ENCODE measurements at regions of chr9 and their contacts with region 1.

Region 1: GRCh38 chr9:34899535-34900158 is 58.4 kb upstream of the PHF24 start:
- DNase-seq: peak; percentile 50 to 90 (median 73)
- ATAC-seq: peak; percentile 98 to 100 (median 100)
- H3K4me3 ChIP-seq: no peak overlapping the region
- H3K4me3 Mint-ChIP-seq: no peak overlapping the region
- H3K27ac ChIP-seq: no peak overlapping the region
- H3K27ac Mint-ChIP-seq: no peak overlapping the region
- H3K4me1 ChIP-seq: no peaks in the 10 kb centered on the region
- H3K4me1 Mint-ChIP-seq: no peaks in the 10 kb centered on the region
- H3K27me3 ChIP-seq: peaks cover 6 to 12% of the 10 kb centered on the region in 2 experiments
- H3K27me3 Mint-ChIP-seq: peaks cover 25 to 29% of the 10 kb centered on the region in 2 donors

Region 2: GRCh38 chr9:34985311-34985899 is 85.8 kb after region 1 on chr9:
- CTCF ChIA-PET with region 1: interaction called, 5 to 23 read pairs
- POLR2A ChIA-PET with region 1: no interaction called
- DNase-seq: peak in 25 of 35 experiments; percentile 8 to 75 (median 31)
- ATAC-seq: no peak
- H3K4me3 ChIP-seq: no peak overlapping the region
- H3K4me3 Mint-ChIP-seq: peak overlapping the region in 1 of 3 donors; percentile 12
- H3K27ac ChIP-seq: no peak overlapping the region
- H3K27ac Mint-ChIP-seq: peak overlapping the region; percentile 30 to 38
- H3K4me1 ChIP-seq: peaks cover 50 to 70% of the 10 kb centered on the region in 2 experiments
- H3K4me1 Mint-ChIP-seq: peaks cover 65 to 74% (median 72%) of the 10 kb centered on the region in 3 donors
- H3K27me3 ChIP-seq: peaks cover 0 to 4% of the 10 kb centered on the region in 2 experiments
- H3K27me3 Mint-ChIP-seq: no peaks in the 10 kb centered on the region

Region 3: DNA sequence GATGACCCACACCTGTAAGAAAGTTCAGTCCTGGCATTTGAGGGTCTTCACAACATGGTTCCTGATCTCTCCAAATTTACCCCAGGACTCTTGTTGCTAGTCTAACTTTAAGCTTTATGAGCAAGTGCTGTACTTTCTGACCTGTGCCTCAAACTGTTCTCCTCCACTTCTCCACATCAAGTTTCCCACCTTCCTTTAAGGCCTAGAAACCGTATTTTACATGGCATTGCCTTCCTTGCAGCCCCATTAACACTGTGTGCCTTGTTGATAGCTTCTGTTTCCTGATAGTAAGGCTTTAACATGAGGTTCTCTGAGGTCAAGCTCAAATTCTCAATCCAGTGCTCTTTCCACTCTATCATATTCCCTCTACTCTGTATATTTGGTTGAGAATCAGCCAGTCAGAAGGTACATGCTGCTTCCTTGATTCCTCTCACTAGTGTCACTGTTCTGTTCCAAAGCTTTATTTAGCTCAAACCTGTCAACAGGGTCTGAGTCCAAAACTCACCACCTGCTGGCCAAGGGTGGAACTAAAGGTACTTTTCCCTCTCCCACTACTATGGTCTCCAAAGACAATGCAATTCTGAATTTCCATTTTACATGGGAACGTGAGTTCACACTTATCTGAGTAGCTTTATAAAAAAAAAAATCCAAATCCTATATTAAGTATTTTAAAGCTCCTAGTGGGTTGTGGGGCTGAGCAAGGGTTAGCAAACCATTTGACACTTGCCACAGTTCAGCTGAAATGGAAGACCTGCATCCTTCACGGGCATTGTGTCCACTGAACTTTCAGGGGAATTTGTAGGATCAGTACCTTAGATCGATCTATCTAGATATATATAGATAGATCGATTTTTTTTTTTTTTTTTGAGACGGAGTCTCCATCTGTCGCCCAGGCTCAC is 151.7 kb after region 1 on chr9:
- CTCF ChIA-PET with region 1: interaction called, 28 to 56 read pairs
- POLR2A ChIA-PET with region 1: interaction called in 1 of 2 experiments, 6 read pairs
- DNase-seq: peak in 31 of 35 experiments; percentile 9 to 67 (median 41)
- ATAC-seq: peak; percentile 54 to 69 (median 64)
- H3K4me3 ChIP-seq: no peak overlapping the region
- H3K4me3 Mint-ChIP-seq: no peak overlapping the region
- H3K27ac ChIP-seq: no peak overlapping the region
- H3K27ac Mint-ChIP-seq: peak overlapping the region in 1 of 2 donors; percentile 23
- H3K4me1 ChIP-seq: no peaks in the 10 kb centered on the region
- H3K4me1 Mint-ChIP-seq: peaks cover 4 to 6% (median 4%) of the 10 kb centered on the region in 3 donors
- H3K27me3 ChIP-seq: no peaks in the 10 kb centered on the region
- H3K27me3 Mint-ChIP-seq: no peaks in the 10 kb centered on the region

Region 4: GRCh38 chr9:35096035-35096849 is 196.6 kb after region 1 on chr9 and contains the start of gene PIGO:
- CTCF ChIA-PET with region 1: interaction called, 5 to 30 read pairs
- POLR2A ChIA-PET with region 1: no interaction called
- DNase-seq: peak; percentile 78 to 94 (median 87)
- ATAC-seq: peak; percentile 91 to 95 (median 94)
- H3K4me3 ChIP-seq: peak within 1 kb of the TSS; percentile 85 to 99
- H3K4me3 Mint-ChIP-seq: peak within 1 kb of the TSS; percentile 83 to 84 (median 83)
- H3K27ac ChIP-seq: peak within 1 kb of the TSS; percentile 99
- H3K27ac Mint-ChIP-seq: peak within 1 kb of the TSS; percentile 89 to 93
- H3K4me1 ChIP-seq: peaks cover 4 to 23% of the 10 kb centered on the region in 2 experiments
- H3K4me1 Mint-ChIP-seq: peaks cover 34 to 41% (median 34%) of the 10 kb centered on the region in 3 donors
- H3K27me3 ChIP-seq: no peaks in the 10 kb centered on the region
- H3K27me3 Mint-ChIP-seq: no peaks in the 10 kb centered on the region
- total RNA-seq, gene PIGO: 23.0 to 32.1 (median 29.9) TPM

Region 5: GRCh38 chr9:35258676-35259474 is 359.2 kb after region 1 on chr9:
- CTCF ChIA-PET with region 1: interaction called in 1 of 2 experiments, 14 read pairs
- POLR2A ChIA-PET with region 1: no interaction called
- DNase-seq: peak in 32 of 35 experiments; percentile 6 to 63 (median 26)
- ATAC-seq: peak in 2 of 4 experiments; percentile 50 to 57
- H3K4me3 ChIP-seq: no peak overlapping the region
- H3K4me3 Mint-ChIP-seq: no peak overlapping the region
- H3K27ac ChIP-seq: no peak overlapping the region
- H3K27ac Mint-ChIP-seq: no peak overlapping the region
- H3K4me1 ChIP-seq: no peaks in the 10 kb centered on the region
- H3K4me1 Mint-ChIP-seq: no peaks in the 10 kb centered on the region
- H3K27me3 ChIP-seq: peaks cover 0 to 3% of the 10 kb centered on the region in 2 experiments
- H3K27me3 Mint-ChIP-seq: peaks cover 3 to 16% of the 10 kb centered on the region in 2 donors

Measured in T-cell (primary cell).